ENCODE measurements at regions of chr1 and their contacts with region 1.

Region 1: DNA sequence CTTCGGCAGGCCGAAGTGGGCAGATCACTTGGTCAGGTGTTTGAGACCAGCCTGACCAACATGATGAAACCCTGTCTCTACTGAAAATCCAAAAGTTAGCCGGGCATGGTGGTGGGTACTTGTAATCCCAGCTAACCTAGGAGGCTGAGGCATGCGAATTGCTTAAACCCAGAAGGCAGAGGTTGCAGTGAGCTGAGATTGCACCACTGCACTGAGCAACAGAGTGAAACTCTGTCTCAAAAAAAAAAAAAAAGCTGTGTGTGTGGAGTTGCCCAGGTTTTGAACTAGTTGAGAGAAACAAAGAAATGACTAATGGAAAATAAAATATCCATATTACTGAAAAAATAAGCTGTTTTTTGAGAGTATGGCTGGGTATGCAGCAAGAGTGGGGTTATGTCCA is 100.2 kb downstream of the GTF2B start:
- DNase-seq: no peak
- H3K4me3 ChIP-seq: no peak overlapping the region
- H3K27ac ChIP-seq: no peak overlapping the region
- H3K4me1 ChIP-seq: no peaks in the 10 kb centered on the region
- H3K27me3 ChIP-seq: no peaks in the 10 kb centered on the region
- CTCF ChIP-seq: no peak

Region 2: DNA sequence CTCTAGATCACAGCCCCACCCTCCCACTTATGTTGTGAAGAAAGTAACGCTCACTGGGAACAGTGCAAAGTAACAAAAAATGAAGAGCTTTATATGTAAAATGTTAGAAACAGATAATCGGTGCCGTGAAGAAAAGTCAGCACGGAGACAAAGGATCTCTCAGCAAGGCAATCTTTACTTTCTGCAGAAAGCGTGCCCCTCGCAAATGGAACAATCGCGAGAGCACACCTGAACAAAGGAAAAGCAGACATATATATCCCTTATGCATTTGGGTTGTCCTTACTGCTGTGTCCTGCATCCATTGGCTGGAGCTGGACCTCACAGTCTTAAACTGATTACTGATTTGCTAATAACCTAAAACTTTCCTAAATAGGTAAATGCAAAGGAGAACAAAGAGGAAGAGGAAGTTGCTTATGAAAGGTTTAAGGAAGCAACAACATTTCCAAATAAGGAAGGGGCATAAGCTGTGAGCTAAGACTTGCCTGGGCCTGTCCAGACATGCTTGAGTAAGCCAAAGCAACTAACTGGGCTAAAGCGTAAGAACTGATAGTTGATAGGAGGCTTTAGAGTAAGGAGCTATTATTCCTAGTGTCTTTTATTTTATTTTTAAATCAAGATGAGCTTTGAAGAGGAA is 10.5 kb after region 1 on chr1:
- CTCF ChIA-PET with region 1: interaction called, 13 read pairs
- POLR2A ChIA-PET with region 1: no interaction called
- intact Hi-C with region 1: no loop called
- DNase-seq: no peak
- H3K4me3 ChIP-seq: no peak overlapping the region
- H3K27ac ChIP-seq: peak overlapping the region; percentile 70; the same call in 1 of the 2 replicates
- H3K4me1 ChIP-seq: peaks cover 20% of the 10 kb centered on the region
- H3K27me3 ChIP-seq: no peaks in the 10 kb centered on the region
- CTCF ChIP-seq: no peak

Measured in PC-9 (cell line).